ENCODE measurements at regions of chr2 and their contacts with region 1.

Region 1: DNA sequence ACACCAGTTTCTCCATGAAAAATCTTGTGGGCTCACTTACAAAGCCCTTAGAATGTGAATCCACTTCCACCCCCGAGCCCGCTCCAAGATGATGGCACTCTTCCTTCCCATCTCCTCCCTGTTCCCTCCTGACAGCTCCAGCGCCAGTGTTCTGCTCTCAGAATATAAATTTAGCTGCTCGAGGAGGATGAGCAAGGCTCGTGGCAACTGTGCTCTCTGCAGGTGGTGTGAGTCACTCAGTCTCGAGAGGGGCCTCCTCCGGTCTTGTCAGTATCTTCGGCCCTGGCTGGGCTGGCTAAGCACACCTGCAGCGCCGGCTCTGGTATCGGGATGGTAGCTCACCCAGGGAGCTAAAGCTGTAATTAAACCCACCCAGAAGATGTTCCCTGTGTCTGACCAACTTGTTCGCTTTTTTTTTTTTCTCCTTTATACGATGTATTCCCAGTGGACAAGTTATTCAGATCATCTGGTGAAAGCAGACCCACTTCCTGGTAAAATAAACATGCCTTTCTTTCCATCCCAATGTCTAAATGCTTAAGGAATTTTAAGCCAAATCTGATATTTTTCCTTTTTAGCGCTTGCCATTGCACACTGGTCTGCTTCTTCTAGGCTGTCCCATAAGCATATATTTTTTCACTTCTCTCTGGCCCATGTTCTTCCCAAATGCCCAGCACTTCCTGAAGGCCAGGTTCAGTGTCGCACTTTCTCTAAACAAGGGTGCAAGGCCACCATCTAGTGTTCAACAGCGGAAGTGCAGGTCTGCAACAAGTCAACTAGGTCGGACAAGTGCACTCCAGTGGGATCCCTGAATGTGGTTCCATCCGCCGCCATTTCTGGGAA is 31.4 kb upstream of the YPEL5 start:
- DNase-seq: peak; percentile 30 to 73 (median 67)
- ATAC-seq: peak; percentile 49
- H3K4me3 ChIP-seq: no peak overlapping the region
- H3K4me3 Mint-ChIP-seq: no peak overlapping the region
- H3K27ac ChIP-seq: no peak overlapping the region
- H3K27ac Mint-ChIP-seq: peak overlapping the region; percentile 3
- H3K4me1 ChIP-seq: peaks cover 7% of the 10 kb centered on the region
- H3K4me1 Mint-ChIP-seq: peaks cover 7% of the 10 kb centered on the region
- H3K27me3 ChIP-seq: no peaks in the 10 kb centered on the region
- H3K27me3 Mint-ChIP-seq: no peaks in the 10 kb centered on the region
- CTCF ChIP-seq: peak; percentile 66

Region 2: GRCh38 chr2:30089171-30089570 is 26.2 kb before region 1 on chr2:
- CTCF ChIA-PET with region 1: interaction called, 16 read pairs
- POLR2A ChIA-PET with region 1: no interaction called
- intact Hi-C with region 1: loop called (anchors 1 kb)
- DNase-seq: no peak
- ATAC-seq: no peak
- H3K4me3 ChIP-seq: no peak overlapping the region
- H3K4me3 Mint-ChIP-seq: no peak overlapping the region
- H3K27ac ChIP-seq: no peak overlapping the region
- H3K27ac Mint-ChIP-seq: no peak overlapping the region
- H3K4me1 ChIP-seq: no peaks in the 10 kb centered on the region
- H3K4me1 Mint-ChIP-seq: no peaks in the 10 kb centered on the region
- H3K27me3 ChIP-seq: peaks cover 3 to 18% of the 10 kb centered on the region in 2 experiments
- H3K27me3 Mint-ChIP-seq: peaks cover 42% of the 10 kb centered on the region
- CTCF ChIP-seq: no peak

Region 3: DNA sequence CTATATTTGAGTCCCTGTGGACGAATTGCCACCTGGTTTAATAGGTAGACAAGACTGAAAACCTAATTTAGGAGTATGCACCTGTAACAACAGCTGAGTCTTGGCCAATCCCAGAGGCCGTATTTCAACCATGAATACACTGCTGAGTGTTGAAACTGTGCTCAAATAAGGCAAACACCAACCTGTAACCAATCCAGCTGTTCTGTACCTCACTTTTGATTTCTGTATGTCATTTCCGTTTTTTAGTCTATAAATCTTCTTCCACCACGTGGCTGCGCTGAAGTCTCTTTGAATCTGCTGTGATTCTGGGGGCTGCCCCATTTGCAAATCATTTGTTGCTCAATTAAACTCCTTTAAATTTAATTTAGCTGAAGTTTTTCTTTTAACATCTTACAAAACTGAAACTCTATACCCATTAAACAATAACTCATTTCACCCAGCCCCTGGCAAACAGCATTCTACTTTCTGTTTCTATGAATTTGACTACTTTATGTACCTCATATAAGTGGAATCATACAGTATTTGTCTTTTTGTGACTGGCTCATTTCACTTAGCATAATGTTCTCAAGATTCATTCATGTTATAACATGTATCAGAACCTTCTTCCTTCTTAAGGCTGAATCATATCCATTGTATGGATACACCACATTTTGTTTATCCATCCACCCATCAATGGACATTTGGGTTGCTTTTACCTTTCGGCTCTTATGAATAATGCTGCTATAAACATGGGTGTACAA is 23.9 kb after region 1 on chr2:
- CTCF ChIA-PET with region 1: interaction called, 11 read pairs
- POLR2A ChIA-PET with region 1: no interaction called
- intact Hi-C with region 1: no loop called
- DNase-seq: peak in 6 of 9 experiments; percentile 9 to 75 (median 54)
- ATAC-seq: peak; percentile 77
- H3K4me3 ChIP-seq: no peak overlapping the region
- H3K4me3 Mint-ChIP-seq: peak overlapping the region; percentile 16
- H3K27ac ChIP-seq: peak overlapping the region in 1 of 2 experiments; percentile 19
- H3K27ac Mint-ChIP-seq: peak overlapping the region; percentile 23
- H3K4me1 ChIP-seq: peaks cover 10% of the 10 kb centered on the region
- H3K4me1 Mint-ChIP-seq: peaks cover 17% of the 10 kb centered on the region
- H3K27me3 ChIP-seq: peaks cover 0 to 2% of the 10 kb centered on the region in 2 experiments
- H3K27me3 Mint-ChIP-seq: peaks cover 7% of the 10 kb centered on the region
- CTCF ChIP-seq: no peak